ENCODE measurements at regions of chr11 and their contacts with region 1.

Region 1: DNA sequence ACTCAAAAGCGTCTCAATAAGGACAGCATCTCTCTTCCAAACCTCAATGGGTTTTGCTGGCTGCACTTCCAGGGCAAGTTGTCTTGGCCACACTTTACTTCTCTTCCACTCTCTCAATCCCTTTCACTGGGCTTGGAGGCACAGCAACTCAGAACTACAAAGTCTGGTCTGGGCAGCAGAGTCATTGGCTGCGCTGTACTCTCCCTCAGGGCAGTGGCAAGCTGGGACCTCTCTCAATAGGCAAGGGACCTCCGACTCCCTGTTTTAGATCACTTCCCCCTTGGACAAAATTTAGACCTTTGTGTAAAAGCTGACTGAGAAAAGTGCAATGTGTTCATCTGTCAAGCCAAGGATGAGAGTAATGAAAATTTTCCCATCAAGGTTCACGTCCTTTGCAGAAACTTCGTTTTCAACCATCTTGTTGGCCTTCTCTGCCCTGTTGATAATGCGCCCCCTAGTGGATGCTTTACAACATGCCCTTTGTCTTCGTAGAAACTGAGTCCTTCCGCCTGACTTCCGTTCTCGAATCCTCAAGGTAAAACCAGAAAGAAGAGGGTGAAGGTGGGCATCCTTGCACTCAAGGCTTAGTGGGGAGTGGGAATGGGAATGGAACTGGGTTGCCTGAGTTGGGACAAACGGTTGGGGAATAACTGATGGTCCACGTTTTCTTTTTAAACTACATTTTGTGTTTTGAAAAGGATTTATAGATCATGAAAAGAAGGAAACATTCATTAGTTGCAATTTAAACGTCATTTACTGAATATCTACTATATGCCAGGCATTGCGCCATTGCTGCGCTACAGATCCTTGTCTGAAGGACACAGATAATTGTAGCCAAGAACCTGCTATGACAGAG is 99.1 kb downstream of the CD44 start:
- DNase-seq: peak; percentile 73
- ATAC-seq: no peak
- H3K4me3 Mint-ChIP-seq: no peak overlapping the region
- H3K27ac Mint-ChIP-seq: no peak overlapping the region
- H3K4me1 Mint-ChIP-seq: peaks cover 87% of the 10 kb centered on the region
- H3K27me3 Mint-ChIP-seq: peaks cover 2% of the 10 kb centered on the region

Region 2: DNA sequence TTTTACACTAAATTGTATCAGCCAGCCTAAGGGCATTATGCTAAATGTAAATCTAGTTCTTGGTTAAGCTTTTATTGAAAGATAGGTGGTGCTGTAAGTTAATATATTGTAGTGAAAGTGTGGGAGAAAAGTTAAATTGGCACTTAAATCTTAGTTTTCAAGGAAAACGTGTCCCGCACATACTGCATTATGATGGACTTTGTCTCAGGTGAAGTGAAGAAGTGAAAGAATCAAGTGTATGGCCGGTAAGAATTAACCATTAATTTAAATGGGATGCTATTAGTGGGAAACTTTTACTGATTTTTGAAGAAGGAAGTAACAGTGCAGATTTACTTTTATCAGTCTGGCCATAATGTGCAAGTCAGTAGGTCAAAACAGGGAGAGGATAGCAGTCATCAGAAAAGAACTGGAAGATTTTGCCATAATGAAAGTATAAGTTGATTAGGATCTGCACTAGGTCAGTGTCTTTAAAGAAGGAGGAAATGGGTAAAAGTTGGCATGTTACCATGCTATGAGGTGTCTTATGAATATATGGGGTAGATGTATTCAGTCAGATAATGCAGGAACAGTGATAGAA is 240.0 kb before region 1 on chr11:
- CTCF ChIA-PET with region 1: interaction called, 14 read pairs
- POLR2A ChIA-PET with region 1: no interaction called
- DNase-seq: no peak
- ATAC-seq: peak; percentile 69
- H3K4me3 Mint-ChIP-seq: no peak overlapping the region
- H3K27ac Mint-ChIP-seq: no peak overlapping the region
- H3K4me1 Mint-ChIP-seq: peaks cover 24% of the 10 kb centered on the region
- H3K27me3 Mint-ChIP-seq: no peaks in the 10 kb centered on the region

Region 3: GRCh38 chr11:35223371-35223796 is 14.7 kb before region 1 on chr11:
- CTCF ChIA-PET with region 1: interaction called, 12 read pairs
- POLR2A ChIA-PET with region 1: interaction called, 3 read pairs
- DNase-seq: no peak
- ATAC-seq: no peak
- H3K4me3 Mint-ChIP-seq: no peak overlapping the region
- H3K27ac Mint-ChIP-seq: peak overlapping the region; percentile 20
- H3K4me1 Mint-ChIP-seq: peaks cover 4% of the 10 kb centered on the region
- H3K27me3 Mint-ChIP-seq: no peaks in the 10 kb centered on the region

Region 4: GRCh38 chr11:35257281-35257680 is 19.2 kb after region 1 on chr11:
- CTCF ChIA-PET with region 1: interaction called, 10 read pairs
- POLR2A ChIA-PET with region 1: no interaction called
- DNase-seq: peak; percentile 30
- ATAC-seq: peak; percentile 100
- H3K4me3 Mint-ChIP-seq: peak overlapping the region; percentile 45
- H3K27ac Mint-ChIP-seq: peak overlapping the region; percentile 87
- H3K4me1 Mint-ChIP-seq: peaks cover 40% of the 10 kb centered on the region
- H3K27me3 Mint-ChIP-seq: peaks cover 6% of the 10 kb centered on the region

Region 5: GRCh38 chr11:35391922-35392813 is 154.1 kb after region 1 on chr11:
- CTCF ChIA-PET with region 1: interaction called, 11 read pairs
- POLR2A ChIA-PET with region 1: no interaction called
- DNase-seq: peak; percentile 84
- ATAC-seq: peak; percentile 80
- H3K4me3 Mint-ChIP-seq: no peak overlapping the region
- H3K27ac Mint-ChIP-seq: no peak overlapping the region
- H3K4me1 Mint-ChIP-seq: peaks cover 15% of the 10 kb centered on the region
- H3K27me3 Mint-ChIP-seq: peaks cover 4% of the 10 kb centered on the region

Region 6: GRCh38 chr11:35511666-35512065 is 273.6 kb after region 1 on chr11:
- CTCF ChIA-PET with region 1: no interaction called
- POLR2A ChIA-PET with region 1: no interaction called
- DNase-seq: no peak
- ATAC-seq: no peak
- H3K4me3 Mint-ChIP-seq: no peak overlapping the region
- H3K27ac Mint-ChIP-seq: no peak overlapping the region
- H3K4me1 Mint-ChIP-seq: no peaks in the 10 kb centered on the region
- H3K27me3 Mint-ChIP-seq: no peaks in the 10 kb centered on the region